PC-3 (cell line): ENCODE measurements at regions of chr14 and their contacts with region 1.

Region 1: DNA sequence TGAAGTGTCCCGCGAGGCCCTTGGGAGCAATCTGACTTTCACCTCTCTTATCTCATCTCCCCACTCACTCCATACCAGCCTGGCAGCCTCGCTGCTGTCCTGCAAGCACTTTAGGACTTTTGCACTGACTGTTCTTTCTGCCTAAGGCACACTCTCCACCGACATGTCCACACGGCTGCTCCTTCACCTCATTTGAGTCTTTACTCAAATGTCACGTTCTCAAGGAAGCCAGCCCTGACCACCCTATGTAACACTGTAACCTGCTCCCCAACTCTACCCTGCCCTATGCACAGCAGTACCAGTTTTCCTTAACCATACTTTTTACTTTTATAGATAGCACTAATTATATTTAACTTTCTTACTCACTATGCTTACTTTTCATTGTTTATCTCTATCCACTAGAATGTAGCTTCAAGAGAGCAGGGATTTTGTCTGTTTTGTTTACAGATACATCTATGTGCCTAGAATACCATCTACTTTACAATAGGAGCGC is 32.0 kb downstream of the PRKD1 start:
- DNase-seq: peak; percentile 35
- ATAC-seq: peak; percentile 77
- H3K4me3 ChIP-seq: no peak overlapping the region
- H3K27ac ChIP-seq: no peak overlapping the region; the same call in 1 of the 2 replicates
- H3K4me1 ChIP-seq: peaks cover 12% of the 10 kb centered on the region
- H3K27me3 ChIP-seq: no peaks in the 10 kb centered on the region
- CTCF ChIP-seq: no peak

Region 2: GRCh38 chr14:29749327-29749726 is 146.3 kb before region 1 on chr14:
- CTCF ChIA-PET with region 1: no interaction called
- POLR2A ChIA-PET with region 1: no interaction called
- intact Hi-C with region 1: loop called (anchors 5 kb)
- DNase-seq: peak; percentile 59
- ATAC-seq: peak; percentile 90
- H3K4me3 ChIP-seq: no peak overlapping the region
- H3K27ac ChIP-seq: peak overlapping the region; percentile 41
- H3K4me1 ChIP-seq: peaks cover 11% of the 10 kb centered on the region
- H3K27me3 ChIP-seq: no peaks in the 10 kb centered on the region
- CTCF ChIP-seq: no peak

Region 3: DNA sequence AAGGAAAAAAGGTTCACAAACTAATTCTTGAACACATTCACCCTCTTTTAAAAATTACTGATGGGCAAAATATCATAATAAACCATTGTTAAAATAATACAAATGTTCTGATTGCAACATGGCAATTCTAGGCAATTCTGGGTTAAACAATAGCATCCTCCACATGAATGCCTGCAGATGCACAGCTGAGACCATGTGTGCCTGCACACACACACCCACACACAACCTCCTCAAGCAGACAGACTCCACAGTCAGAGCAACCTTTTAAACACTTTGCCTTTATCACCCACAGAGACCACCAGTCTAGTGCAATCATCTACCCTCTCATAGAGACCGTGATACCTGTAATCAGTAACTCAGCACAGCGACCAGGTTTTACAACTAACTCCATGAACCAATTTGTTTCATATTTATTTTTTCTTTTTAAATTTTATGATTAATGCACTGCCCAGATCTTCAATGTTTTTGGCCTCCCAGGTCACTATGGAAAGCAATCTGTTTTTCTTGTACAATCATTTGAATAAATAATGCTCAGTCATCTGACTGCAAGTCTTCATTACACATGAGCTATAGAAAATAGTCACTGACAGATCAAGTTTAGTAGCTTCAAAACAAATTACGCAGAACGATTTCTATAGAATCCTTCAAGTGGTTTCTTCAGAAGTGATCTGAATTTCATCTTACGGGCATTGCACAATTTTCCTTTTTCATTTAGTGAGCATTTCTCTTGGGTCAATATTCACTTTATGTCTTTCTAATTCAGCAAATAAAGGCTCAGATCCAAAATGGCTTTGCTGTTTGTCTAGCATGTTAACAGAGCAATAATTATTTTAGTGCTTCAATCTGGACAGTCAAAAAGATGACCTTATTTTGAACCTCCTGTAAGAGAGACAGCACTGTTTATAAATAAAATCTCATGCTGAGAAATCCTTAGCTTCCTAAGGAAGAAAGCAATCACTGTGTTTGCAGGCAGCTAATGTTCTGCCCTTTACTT is 73.7 kb before region 1 on chr14:
- CTCF ChIA-PET with region 1: no interaction called
- POLR2A ChIA-PET with region 1: no interaction called
- intact Hi-C with region 1: loop called (anchors 5 kb)
- DNase-seq: peak; percentile 5
- ATAC-seq: peak; percentile 73
- H3K4me3 ChIP-seq: no peak overlapping the region
- H3K27ac ChIP-seq: no peak overlapping the region
- H3K4me1 ChIP-seq: no peaks in the 10 kb centered on the region
- H3K27me3 ChIP-seq: no peaks in the 10 kb centered on the region
- CTCF ChIP-seq: no peak